ENCODE measurements at regions of chr17 and their contacts with region 1.

Region 1: GRCh38 chr17:46935658-46936266 is 12.8 kb downstream of the GOSR2 start:
- DNase-seq: no peak

Region 2: GRCh38 chr17:46851029-46851741 is 84.6 kb before region 1 on chr17 and contains the start of gene WNT9B:
- in situ Hi-C with region 1: loop called (anchors 10 kb)
- DNase-seq: no peak